Panc1 (cell line): ENCODE measurements at regions of chr6 and their contacts with region 1.

Region 1: DNA sequence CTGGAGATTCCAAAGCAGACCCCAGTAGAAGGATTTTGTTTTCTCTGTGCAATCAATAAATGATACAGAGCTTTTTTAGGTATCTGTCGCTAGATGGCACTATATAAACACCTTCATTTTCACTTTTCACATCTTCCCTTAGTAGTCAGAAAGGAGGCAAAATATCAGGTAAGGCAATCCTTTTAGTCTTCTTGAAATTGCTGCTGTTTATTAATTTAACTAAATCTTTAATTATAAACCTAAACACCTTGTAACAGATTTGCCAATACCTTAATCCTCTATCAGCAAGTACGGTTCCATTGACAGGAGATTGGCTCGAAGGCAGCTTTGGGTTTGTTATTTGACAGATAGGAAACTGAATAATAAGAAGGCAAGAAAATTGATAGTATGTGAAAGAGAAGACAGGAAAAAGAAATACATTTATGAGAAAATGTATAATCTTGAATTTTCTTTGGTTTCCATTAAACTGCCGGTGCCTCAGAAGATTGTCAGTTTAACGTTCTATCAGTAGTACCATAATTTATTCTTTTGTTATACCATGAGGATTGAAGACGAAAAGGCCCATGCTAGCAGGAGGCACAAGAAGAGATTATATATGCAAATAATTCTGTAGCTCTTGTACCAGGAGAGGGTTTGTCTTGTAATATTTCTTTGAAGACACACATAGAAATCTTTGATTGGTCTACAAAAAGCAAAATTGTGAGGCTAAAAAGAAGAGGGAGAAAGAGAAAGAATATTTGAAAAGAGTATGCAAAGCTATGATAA is 23.5 kb upstream of the IBTK start:
- DNase-seq: no peak
- ATAC-seq: no peak; the same call in 1 of the 2 replicates
- H3K4me3 ChIP-seq: no peak overlapping the region
- H3K27ac ChIP-seq: no peak overlapping the region
- H3K4me1 ChIP-seq: no peaks in the 10 kb centered on the region
- H3K27me3 ChIP-seq: no peaks in the 10 kb centered on the region
- CTCF ChIP-seq: peak; percentile 64; the same call in 1 of the 2 replicates

Region 2: GRCh38 chr6:82030761-82031503 is 240.1 kb before region 1 on chr6:
- CTCF ChIA-PET with region 1: no interaction called
- POLR2A ChIA-PET with region 1: no interaction called
- in situ Hi-C with region 1: no loop called
- intact Hi-C with region 1: no loop called
- DNase-seq: no peak
- ATAC-seq: no peak
- H3K4me3 ChIP-seq: no peak overlapping the region
- H3K27ac ChIP-seq: no peak overlapping the region
- H3K4me1 ChIP-seq: no peaks in the 10 kb centered on the region
- H3K27me3 ChIP-seq: no peaks in the 10 kb centered on the region
- CTCF ChIP-seq: no peak

Region 3: GRCh38 chr6:82589509-82590206 is 318.6 kb after region 1 on chr6:
- CTCF ChIA-PET with region 1: no interaction called
- POLR2A ChIA-PET with region 1: no interaction called
- in situ Hi-C with region 1: no loop called
- intact Hi-C with region 1: loop called (anchors 5 kb)
- DNase-seq: no peak
- ATAC-seq: peak; percentile 78
- H3K4me3 ChIP-seq: no peak overlapping the region
- H3K27ac ChIP-seq: no peak overlapping the region
- H3K4me1 ChIP-seq: no peaks in the 10 kb centered on the region
- H3K27me3 ChIP-seq: no peaks in the 10 kb centered on the region
- CTCF ChIP-seq: peak; percentile 39; the same call in 1 of the 2 replicates